ENCODE measurements at regions of chr22 and their contacts with region 1.

Region 1: GRCh38 chr22:31561238-31561887 is 65.0 kb downstream of the SFI1 start:
- DNase-seq: peak; percentile 39
- H3K4me3 Mint-ChIP-seq: no peak overlapping the region
- H3K27ac Mint-ChIP-seq: peak overlapping the region; percentile 77
- H3K4me1 Mint-ChIP-seq: peaks cover 16% of the 10 kb centered on the region
- H3K27me3 Mint-ChIP-seq: no peaks in the 10 kb centered on the region

Region 2: DNA sequence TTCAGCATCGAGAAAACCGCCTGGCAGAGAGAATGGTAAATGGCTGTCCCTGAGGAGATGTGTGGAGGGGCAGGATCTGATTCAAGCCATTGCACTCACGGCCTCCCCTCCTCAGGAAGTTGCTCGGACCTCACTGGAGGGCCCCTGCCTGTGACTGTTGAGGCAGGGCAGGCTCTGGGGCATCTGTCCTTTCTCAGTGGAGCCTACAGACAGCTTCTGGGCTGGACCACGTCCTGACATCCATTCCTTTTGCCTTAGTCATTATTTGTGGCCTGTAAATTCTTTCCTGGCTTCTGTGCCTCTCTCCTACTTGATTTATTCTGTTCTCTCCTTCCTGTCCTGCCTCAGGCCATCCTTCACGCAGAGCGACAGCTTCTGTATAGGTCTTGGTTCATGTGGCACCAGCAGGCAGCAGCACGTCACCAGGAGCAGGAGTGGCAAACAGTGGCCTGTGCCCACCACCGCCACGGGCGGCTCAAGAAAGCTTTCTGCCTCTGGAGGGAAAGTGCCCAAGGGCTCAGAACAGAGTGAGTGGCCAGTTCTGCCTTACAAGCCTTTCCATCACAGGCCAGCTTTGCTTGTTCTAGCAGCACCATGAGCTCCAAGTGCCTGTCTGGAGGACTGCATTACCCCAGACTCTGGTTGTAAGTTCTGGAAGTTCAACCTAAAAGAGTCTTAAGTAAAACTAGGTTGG is 41.0 kb after region 1 on chr22:
- intact Hi-C with region 1: loop called (anchors 5 kb)
- DNase-seq: no peak
- H3K4me3 Mint-ChIP-seq: no peak overlapping the region
- H3K27ac Mint-ChIP-seq: no peak overlapping the region
- H3K4me1 Mint-ChIP-seq: no peaks in the 10 kb centered on the region
- H3K27me3 Mint-ChIP-seq: no peaks in the 10 kb centered on the region